MCF 10A (cell line): ENCODE measurements at regions of chr20 and their contacts with region 1.

Region 1: GRCh38 chr20:31572701-31573554 is 32.2 kb upstream of the ID1 start:
- DNase-seq: peak; percentile 99
- H3K4me3 Mint-ChIP-seq: peak overlapping the region; percentile 87
- H3K27ac Mint-ChIP-seq: peak overlapping the region; percentile 96
- H3K4me1 Mint-ChIP-seq: peaks cover 27% of the 10 kb centered on the region
- H3K27me3 Mint-ChIP-seq: no peaks in the 10 kb centered on the region
- CTCF ChIP-seq: no peak

Region 2: DNA sequence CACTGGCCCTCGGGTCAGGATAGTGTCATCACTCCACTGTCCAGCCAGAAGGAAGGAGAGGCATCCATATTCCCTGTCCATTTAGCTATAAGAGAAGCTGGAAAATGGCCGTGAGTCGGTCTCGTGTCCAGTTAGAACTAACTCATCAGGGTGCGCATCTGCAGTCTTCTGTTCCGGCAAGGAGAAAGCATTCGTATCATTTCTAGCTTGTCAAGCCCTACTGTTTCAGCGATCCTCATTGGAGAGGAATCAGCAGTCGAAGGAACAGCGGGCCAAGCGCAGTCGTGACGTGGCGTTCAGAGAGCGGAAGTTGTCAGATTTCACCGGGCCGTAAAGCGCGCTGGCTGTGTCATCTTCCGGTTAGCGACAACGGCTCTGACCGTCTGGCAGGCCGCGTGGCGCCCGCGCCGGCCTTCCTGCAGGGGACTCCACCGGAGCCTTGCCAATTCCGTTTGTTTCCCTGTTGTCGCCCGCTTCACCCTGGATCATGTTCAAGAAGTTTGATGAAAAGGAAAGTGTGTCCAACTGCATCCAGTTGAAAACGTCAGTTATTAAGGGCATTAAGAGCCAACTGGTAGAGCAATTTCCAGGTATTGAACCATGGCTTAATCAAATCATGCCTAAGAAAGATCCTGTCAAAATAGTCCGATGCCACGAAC is 25.8 kb before region 1 on chr20:
- CTCF ChIA-PET with region 1: interaction called, 5 read pairs
- POLR2A ChIA-PET with region 1: interaction called, 18 read pairs
- intact Hi-C with region 1: no loop called
- DNase-seq: peak; percentile 87
- H3K4me3 Mint-ChIP-seq: peak overlapping the region; percentile 82
- H3K27ac Mint-ChIP-seq: peak overlapping the region; percentile 97
- H3K4me1 Mint-ChIP-seq: peaks cover 14% of the 10 kb centered on the region
- H3K27me3 Mint-ChIP-seq: no peaks in the 10 kb centered on the region
- CTCF ChIP-seq: no peak

Region 3: DNA sequence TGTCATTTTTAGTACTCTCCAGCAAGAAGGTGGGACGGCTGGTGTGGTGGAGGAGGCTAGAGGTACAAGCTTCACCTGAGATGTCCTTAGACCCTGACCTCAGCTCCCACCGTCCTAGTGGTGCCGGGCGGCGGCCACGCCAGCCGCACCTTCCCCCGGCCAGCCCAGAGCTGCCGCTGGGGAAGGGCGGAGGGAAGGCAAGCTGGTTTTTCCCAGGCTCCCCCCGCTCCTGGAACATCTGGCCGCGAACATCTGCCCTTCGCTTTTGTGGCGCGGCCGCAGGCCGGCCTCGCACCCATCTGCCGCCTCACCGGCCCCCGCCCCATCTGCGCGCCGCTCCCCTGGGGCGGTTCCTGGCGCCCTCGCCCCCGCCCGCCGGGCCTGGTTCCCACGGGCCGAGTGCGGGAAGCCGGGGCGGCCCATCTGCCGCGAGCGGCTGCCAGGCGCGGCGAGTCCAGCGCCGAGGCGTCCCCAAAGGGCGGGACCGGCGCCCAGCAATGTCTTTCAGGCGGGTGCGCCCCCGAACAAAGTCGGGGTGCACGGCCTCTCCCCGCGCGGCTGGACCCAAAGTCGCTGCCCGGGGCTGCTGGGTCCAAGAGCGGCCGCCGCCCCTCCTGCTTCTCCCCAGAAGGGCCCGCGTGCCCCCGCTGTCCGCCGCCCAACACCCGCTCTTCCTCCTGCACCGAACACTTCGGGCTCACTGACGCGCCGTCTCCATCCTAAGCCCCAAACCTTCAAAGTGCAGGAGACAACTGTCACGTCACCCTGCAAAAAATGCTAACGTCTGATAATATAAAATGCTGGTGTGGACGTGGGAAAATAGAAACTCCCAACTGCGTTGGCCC is 14.8 kb after region 1 on chr20:
- CTCF ChIA-PET with region 1: interaction called, 34 read pairs
- POLR2A ChIA-PET with region 1: interaction called, 72 read pairs
- intact Hi-C with region 1: no loop called
- DNase-seq: no peak
- H3K4me3 Mint-ChIP-seq: peak overlapping the region; percentile 55
- H3K27ac Mint-ChIP-seq: no peak overlapping the region
- H3K4me1 Mint-ChIP-seq: peaks cover 6% of the 10 kb centered on the region
- H3K27me3 Mint-ChIP-seq: no peaks in the 10 kb centered on the region
- CTCF ChIP-seq: no peak

Region 4: GRCh38 chr20:31595654-31596411 is 22.9 kb after region 1 on chr20:
- CTCF ChIA-PET with region 1: interaction called, 1,902 read pairs
- POLR2A ChIA-PET with region 1: interaction called, 1,321 read pairs
- intact Hi-C with region 1: loop called (anchors 1 kb)
- DNase-seq: peak; percentile 92
- H3K4me3 Mint-ChIP-seq: peak overlapping the region; percentile 43
- H3K27ac Mint-ChIP-seq: peak overlapping the region; percentile 94
- H3K4me1 Mint-ChIP-seq: peaks cover 28% of the 10 kb centered on the region
- H3K27me3 Mint-ChIP-seq: no peaks in the 10 kb centered on the region
- CTCF ChIP-seq: no peak